Dendritic cell treated with granulocyte-macrophage colony-stimulating factor and Interleukin-4, amounts not matched to agents 40 ng/mL and 50 ng/mL, for 4 days (primary cell): ENCODE measurements at regions of chr19 and their contacts with region 1.

Region 1: GRCh38 chr19:39557441-39558151 is 17.6 kb upstream of the EID2 start:
- H3K4me3 Mint-ChIP-seq: peak overlapping the region; percentile 55
- H3K27ac Mint-ChIP-seq: peak overlapping the region; percentile 54
- H3K4me1 Mint-ChIP-seq: peaks cover 58% of the 10 kb centered on the region
- H3K27me3 Mint-ChIP-seq: peaks cover 21% of the 10 kb centered on the region

Region 2: DNA sequence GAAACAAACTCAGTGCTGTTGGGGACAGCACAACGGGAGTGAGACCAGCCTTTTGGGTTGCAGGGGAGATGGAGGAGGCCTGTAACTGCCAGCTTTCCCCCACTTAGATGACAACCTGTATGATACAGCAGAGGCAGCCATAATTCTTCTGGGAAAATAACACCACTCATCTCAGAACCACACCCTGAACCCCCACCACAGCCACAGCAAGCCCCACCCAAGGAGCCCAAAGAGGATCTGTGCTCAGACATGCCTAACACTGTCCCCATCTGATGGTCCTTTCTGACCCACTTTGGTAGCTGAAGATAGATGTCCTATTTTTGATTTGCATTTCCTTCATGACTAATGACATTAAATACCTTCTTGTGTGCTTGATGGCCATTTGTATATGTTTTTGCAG is 60.1 kb after region 1 on chr19:
- intact Hi-C with region 1: no loop called
- H3K4me3 Mint-ChIP-seq: no peak overlapping the region
- H3K27ac Mint-ChIP-seq: no peak overlapping the region
- H3K4me1 Mint-ChIP-seq: no peaks in the 10 kb centered on the region
- H3K27me3 Mint-ChIP-seq: peaks cover 28% of the 10 kb centered on the region

Region 3: DNA sequence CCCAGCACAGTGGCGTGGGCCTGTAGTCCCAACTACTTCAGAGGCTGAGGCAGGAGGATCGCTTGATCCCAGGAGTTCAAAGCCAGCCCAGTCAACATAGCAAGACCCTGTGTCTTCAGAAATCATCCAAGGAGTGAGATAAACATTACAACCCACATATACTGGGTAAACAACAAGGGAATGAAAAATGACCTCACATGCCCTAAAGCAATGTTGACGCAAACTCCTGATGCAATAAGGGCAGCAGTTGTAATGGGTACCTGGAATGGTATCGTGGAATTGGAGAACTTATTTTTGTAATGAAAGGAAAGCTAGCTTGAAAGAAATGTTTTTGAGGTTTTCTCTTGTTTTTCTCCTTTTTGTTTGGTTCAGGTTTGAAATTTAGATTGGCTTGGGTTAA is 73.6 kb after region 1 on chr19:
- intact Hi-C with region 1: loop called (anchors 2 kb)
- H3K4me3 Mint-ChIP-seq: no peak overlapping the region
- H3K27ac Mint-ChIP-seq: no peak overlapping the region
- H3K4me1 Mint-ChIP-seq: no peaks in the 10 kb centered on the region
- H3K27me3 Mint-ChIP-seq: peaks cover 16% of the 10 kb centered on the region

Region 4: GRCh38 chr19:39765091-39766076 is 207.8 kb after region 1 on chr19:
- intact Hi-C with region 1: loop called (anchors 10 kb)
- H3K4me3 Mint-ChIP-seq: no peak overlapping the region
- H3K27ac Mint-ChIP-seq: no peak overlapping the region
- H3K4me1 Mint-ChIP-seq: no peaks in the 10 kb centered on the region
- H3K27me3 Mint-ChIP-seq: peaks cover 30% of the 10 kb centered on the region

Region 5: DNA sequence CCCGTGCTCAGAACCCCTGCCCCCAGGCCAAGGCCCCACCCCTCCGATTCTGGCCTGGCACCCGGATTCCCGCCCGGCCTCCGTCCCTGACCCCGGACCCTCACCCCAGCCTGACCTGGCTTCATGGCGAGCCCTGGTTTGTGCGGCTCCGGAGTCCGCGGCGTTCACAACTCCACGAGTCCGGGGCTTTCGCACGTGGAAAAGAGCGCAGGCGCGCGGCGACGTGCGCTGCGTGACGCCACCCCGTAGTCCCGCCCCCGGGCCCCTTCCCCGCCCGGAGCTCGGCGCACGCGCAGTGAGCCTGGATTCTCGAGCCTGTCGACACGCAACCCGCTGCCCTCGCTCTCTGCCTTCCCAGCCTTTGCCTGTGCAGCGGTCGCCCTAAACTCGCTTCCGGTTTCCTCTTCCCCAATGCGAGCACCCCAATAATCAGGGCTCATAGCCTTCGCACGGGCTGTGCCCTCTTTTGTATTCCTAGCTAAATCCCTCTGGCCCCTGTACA is 288.6 kb after region 1 on chr19 and contains the start of gene FBL:
- intact Hi-C with region 1: loop called (anchors 10 kb)
- H3K4me3 Mint-ChIP-seq: peak within 1 kb of the TSS; percentile 87
- H3K27ac Mint-ChIP-seq: peak within 1 kb of the TSS; percentile 86
- H3K4me1 Mint-ChIP-seq: peaks cover 46% of the 10 kb centered on the region
- H3K27me3 Mint-ChIP-seq: peaks cover 8% of the 10 kb centered on the region